Breast epithelium (tissue), 4 donors: ENCODE measurements at regions of chr4 and their contacts with region 1.

Region 1: GRCh38 chr4:23463071-23463470 is 426.8 kb downstream of the PPARGC1A start:
- DNase-seq: no peak
- H3K4me3 ChIP-seq: no peak overlapping the region
- H3K27ac ChIP-seq: no peak overlapping the region
- H3K4me1 ChIP-seq: no peaks in the 10 kb centered on the region
- H3K27me3 ChIP-seq: no peaks in the 10 kb centered on the region
- CTCF ChIP-seq: no peak
- POLR2A ChIP-seq: no peak

Region 2: GRCh38 chr4:24117975-24118374 is 654.9 kb after region 1 on chr4:
- intact Hi-C with region 1: loop called (anchors 5 kb)
- DNase-seq: no peak
- H3K4me3 ChIP-seq: no peak overlapping the region
- H3K27ac ChIP-seq: no peak overlapping the region
- H3K4me1 ChIP-seq: no peaks in the 10 kb centered on the region
- H3K27me3 ChIP-seq: no peaks in the 10 kb centered on the region
- CTCF ChIP-seq: no peak
- POLR2A ChIP-seq: no peak